Heart right ventricle (tissue), 16 donors: ENCODE measurements at regions of chr18 and their contacts with region 1.

Region 1: GRCh38 chr18:65436430-65436829 is 314.4 kb upstream of the CDH7 start:
- DNase-seq: no peak
- ATAC-seq: no peak
- H3K4me3 ChIP-seq: no peak overlapping the region
- H3K27ac ChIP-seq: no peak overlapping the region
- H3K4me1 ChIP-seq: no peaks in the 10 kb centered on the region
- H3K27me3 ChIP-seq: no peaks in the 10 kb centered on the region
- CTCF ChIP-seq: no peak

Region 2: DNA sequence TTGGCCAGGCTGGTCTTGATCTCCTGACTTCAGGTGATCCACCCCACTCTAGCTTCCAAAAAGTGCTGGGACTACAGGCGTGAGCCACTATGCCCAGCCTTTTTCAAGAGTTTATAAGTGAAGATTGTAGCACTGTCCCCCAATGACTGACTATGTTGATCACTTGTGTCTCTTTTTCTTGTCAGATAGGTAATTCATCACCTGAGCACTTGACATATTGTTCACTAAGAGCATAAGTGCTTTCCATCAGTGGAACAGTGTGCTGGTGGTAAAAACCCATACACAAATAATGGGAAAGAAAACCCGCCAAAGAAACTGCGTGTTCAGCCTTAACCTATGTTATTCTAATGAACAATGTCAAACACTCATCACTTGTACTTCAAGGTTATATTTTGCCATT is 100.0 kb before region 1 on chr18:
- intact Hi-C with region 1: no loop called
- DNase-seq: no peak
- ATAC-seq: no peak
- H3K4me3 ChIP-seq: no peak overlapping the region
- H3K27ac ChIP-seq: no peak overlapping the region
- H3K4me1 ChIP-seq: no peaks in the 10 kb centered on the region
- H3K27me3 ChIP-seq: no peaks in the 10 kb centered on the region
- CTCF ChIP-seq: no peak

Region 3: GRCh38 chr18:65415020-65415566 is 21.3 kb before region 1 on chr18:
- intact Hi-C with region 1: loop called in 1 of 10 experiments (anchors 2 kb)
- DNase-seq: no peak
- ATAC-seq: no peak
- H3K4me3 ChIP-seq: no peak overlapping the region
- H3K27ac ChIP-seq: no peak overlapping the region
- H3K4me1 ChIP-seq: no peaks in the 10 kb centered on the region
- H3K27me3 ChIP-seq: no peaks in the 10 kb centered on the region
- CTCF ChIP-seq: no peak